Colonic mucosa (tissue), 4 donors: ENCODE measurements at regions of chr1 and their contacts with region 1.

Region 1: GRCh38 chr1:60978421-60979357 is 103.7 kb upstream of the NFIA start:
- DNase-seq: peak; percentile 30
- H3K4me3 ChIP-seq: no peak overlapping the region
- H3K27ac ChIP-seq: no peak overlapping the region
- H3K4me1 ChIP-seq: no peaks in the 10 kb centered on the region
- H3K27me3 ChIP-seq: no peaks in the 10 kb centered on the region
- CTCF ChIP-seq: peak; percentile 57

Region 2: GRCh38 chr1:60727552-60727951 is 251.1 kb before region 1 on chr1:
- intact Hi-C with region 1: no loop called
- DNase-seq: no peak
- H3K4me3 ChIP-seq: no peak overlapping the region
- H3K27ac ChIP-seq: no peak overlapping the region
- H3K4me1 ChIP-seq: no peaks in the 10 kb centered on the region
- H3K27me3 ChIP-seq: no peaks in the 10 kb centered on the region
- CTCF ChIP-seq: no peak

Region 3: GRCh38 chr1:60825593-60825992 is 153.1 kb before region 1 on chr1:
- intact Hi-C with region 1: no loop called
- DNase-seq: peak; percentile 49
- H3K4me3 ChIP-seq: no peak overlapping the region
- H3K27ac ChIP-seq: no peak overlapping the region
- H3K4me1 ChIP-seq: peaks cover 6% of the 10 kb centered on the region
- H3K27me3 ChIP-seq: no peaks in the 10 kb centered on the region
- CTCF ChIP-seq: no peak

Region 4: DNA sequence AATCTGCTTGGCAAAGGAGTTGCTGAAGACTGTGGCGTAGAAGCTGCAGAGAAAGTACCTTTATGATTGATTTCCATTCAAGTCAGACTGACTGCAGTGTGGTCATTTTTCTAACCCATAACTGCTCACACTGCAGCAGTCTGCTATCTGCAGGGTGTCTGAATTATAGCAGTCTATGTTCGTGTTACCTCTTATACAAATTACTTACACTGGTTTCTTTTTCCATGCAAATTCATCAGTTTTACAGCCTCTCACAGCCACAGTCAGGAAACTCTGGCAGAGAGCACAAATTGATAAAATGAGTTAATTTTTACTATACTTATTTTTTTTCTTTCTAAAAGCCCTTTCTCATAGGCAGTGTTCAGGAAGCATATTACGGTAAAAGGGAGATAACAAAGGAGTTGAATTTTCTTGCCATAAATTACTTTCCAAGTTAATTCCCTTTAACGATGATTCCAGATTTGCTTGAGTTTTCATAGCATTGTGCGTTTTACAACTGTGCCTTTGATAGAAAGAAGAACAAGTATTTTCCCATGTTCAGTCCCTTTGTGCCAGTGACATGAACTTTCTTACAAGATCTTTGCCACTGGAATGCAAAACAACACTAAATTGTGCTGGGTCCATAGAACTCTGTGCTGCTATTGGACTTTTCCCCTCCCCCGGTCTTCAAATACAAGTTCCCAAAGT is 365.2 kb after region 1 on chr1:
- intact Hi-C with region 1: loop called (anchors 10 kb)
- DNase-seq: no peak
- H3K4me3 ChIP-seq: no peak overlapping the region
- H3K27ac ChIP-seq: no peak overlapping the region
- H3K4me1 ChIP-seq: no peaks in the 10 kb centered on the region
- H3K27me3 ChIP-seq: no peaks in the 10 kb centered on the region
- CTCF ChIP-seq: no peak

Region 5: GRCh38 chr1:61851849-61852669 is 873.4 kb after region 1 on chr1:
- intact Hi-C with region 1: loop called (anchors 10 kb)
- DNase-seq: no peak
- H3K4me3 ChIP-seq: no peak overlapping the region
- H3K27ac ChIP-seq: no peak overlapping the region
- H3K4me1 ChIP-seq: no peaks in the 10 kb centered on the region
- H3K27me3 ChIP-seq: no peaks in the 10 kb centered on the region
- CTCF ChIP-seq: peak; percentile 53